ENCODE measurements at regions of chr5 and their contacts with region 1.

Region 1: GRCh38 chr5:69042915-69043658 is 50.7 kb upstream of the SLC30A5 start:
- DNase-seq: no peak

Region 2: GRCh38 chr5:68839019-68839552 is 204.0 kb before region 1 on chr5:
- intact Hi-C with region 1: no loop called
- DNase-seq: no peak

Region 3: GRCh38 chr5:68994645-68995044 is 48.4 kb before region 1 on chr5:
- intact Hi-C with region 1: no loop called
- DNase-seq: no peak

Region 4: GRCh38 chr5:69331528-69332445 is 288.7 kb after region 1 on chr5:
- intact Hi-C with region 1: loop called (anchors 2 kb)
- DNase-seq: no peak

Measured in cardiac septum (tissue), 1 donor.